GM12878 (cell line): ENCODE measurements at regions of chr20 and their contacts with region 1.

Region 1: DNA sequence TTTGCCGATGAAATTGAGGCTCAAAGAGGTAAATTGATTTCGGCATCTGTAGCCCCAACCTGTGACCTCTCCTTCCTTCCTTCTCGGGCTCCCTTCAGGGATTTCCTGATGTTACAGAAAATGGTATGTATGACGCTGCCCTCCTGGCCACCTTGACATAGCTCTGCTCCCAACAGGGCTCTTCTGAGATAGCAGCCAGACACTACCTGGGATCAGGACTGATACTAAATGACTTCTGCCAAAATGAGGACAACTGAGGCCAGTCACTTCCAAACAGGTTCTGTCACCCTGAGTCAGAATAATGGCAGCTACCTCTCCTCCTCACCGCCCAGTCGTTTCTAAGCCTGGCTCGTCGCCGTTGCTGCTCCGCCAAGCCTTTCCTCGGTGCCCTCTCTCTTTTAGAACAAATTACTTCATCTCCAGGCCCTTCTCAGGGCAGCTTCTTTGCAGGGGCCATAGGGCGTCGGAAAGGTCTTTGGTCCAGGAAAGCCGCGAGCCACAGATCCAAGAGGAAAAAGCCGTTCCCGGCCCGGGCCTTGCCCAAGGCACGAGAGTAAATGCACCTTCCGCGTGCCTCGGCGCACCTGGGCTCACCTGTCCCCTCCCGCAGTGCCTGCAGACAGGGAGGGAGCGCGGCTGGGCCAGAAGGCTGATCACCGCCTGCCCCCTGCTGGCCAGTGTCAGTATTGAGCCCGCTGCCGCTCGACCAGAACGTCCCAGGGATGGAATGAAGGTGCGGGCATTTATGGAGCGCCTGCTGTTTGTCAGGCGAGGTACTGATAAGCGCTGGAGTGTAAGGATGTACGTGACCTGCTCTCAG is 904 bp upstream of the LPIN3 start:
- DNase-seq: no peak
- ATAC-seq: peak; percentile 96
- H3K4me3 ChIP-seq: peak overlapping the region; percentile 68
- H3K27ac ChIP-seq: no peak overlapping the region
- H3K4me1 ChIP-seq: peaks cover 5% of the 10 kb centered on the region
- H3K27me3 ChIP-seq: no peaks in the 10 kb centered on the region
- CTCF ChIP-seq: peak; percentile 92 to 96 (median 95)
- EP300 ChIP-seq: no peak
- POLR2A ChIP-seq: no peak
- RAD21 ChIP-seq: peak; percentile 96

Region 2: GRCh38 chr20:41155261-41155660 is 184.5 kb before region 1 on chr20:
- CTCF ChIA-PET with region 1: interaction called, 14 read pairs
- POLR2A ChIA-PET with region 1: no interaction called
- RAD21 ChIA-PET with region 1: interaction called, 8 read pairs
- SMC1A ChIA-PET with region 1: interaction called, 3 read pairs
- in situ Hi-C with region 1: no loop called
- intact Hi-C with region 1: no loop called
- DNase-seq: no peak
- ATAC-seq: no peak
- H3K4me3 ChIP-seq: no peak overlapping the region
- H3K27ac ChIP-seq: no peak overlapping the region
- H3K4me1 ChIP-seq: peaks cover 54% of the 10 kb centered on the region
- H3K27me3 ChIP-seq: no peaks in the 10 kb centered on the region
- CTCF ChIP-seq: no peak
- EP300 ChIP-seq: no peak
- POLR2A ChIP-seq: no peak
- RAD21 ChIP-seq: no peak

Region 3: DNA sequence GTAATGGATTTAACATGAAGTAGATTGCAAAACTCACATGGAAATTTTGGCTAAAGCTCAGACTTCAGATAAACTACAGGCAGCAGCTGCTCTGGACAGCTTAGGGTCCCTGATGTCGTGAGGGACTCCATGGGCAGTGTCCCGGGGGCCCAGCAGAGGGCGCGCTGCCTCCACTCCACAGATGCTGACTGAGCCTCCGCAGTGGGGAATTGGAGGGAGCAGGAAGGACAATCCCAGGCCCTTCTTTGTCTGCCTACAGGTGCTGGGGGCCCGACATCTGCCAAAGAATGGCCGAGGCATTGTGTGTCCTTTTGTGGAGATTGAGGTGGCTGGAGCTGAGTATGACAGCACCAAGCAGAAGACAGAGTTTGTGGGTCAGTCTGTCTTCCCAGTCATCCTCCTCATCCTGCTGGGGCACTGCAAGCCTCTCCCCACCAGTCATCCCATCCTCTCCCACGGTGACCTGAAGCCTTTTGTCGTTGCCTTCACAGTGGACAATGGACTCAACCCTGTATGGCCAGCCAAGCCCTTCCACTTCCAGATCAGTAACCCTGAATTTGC is 166.5 kb before region 1 on chr20:
- CTCF ChIA-PET with region 1: interaction called, 52 read pairs
- POLR2A ChIA-PET with region 1: interaction called, 3 read pairs
- RAD21 ChIA-PET with region 1: interaction called, 11 read pairs
- SMC1A ChIA-PET with region 1: interaction called, 12 read pairs
- in situ Hi-C with region 1: loop called (anchors 5 kb)
- intact Hi-C with region 1: loop called (anchors 1 kb)
- DNase-seq: no peak
- ATAC-seq: peak; percentile 97
- H3K4me3 ChIP-seq: no peak overlapping the region
- H3K27ac ChIP-seq: no peak overlapping the region
- H3K4me1 ChIP-seq: no peaks in the 10 kb centered on the region
- H3K27me3 ChIP-seq: no peaks in the 10 kb centered on the region
- CTCF ChIP-seq: peak; percentile 87 to 94 (median 92)
- EP300 ChIP-seq: no peak
- POLR2A ChIP-seq: no peak
- RAD21 ChIP-seq: peak; percentile 90

Region 4: GRCh38 chr20:41249406-41250281 is 90.1 kb before region 1 on chr20:
- CTCF ChIA-PET with region 1: interaction called, 18 read pairs
- POLR2A ChIA-PET with region 1: no interaction called
- RAD21 ChIA-PET with region 1: interaction called, 8 read pairs
- SMC1A ChIA-PET with region 1: interaction called, 10 read pairs
- in situ Hi-C with region 1: no loop called
- intact Hi-C with region 1: loop called (anchors 5 kb)
- DNase-seq: no peak
- ATAC-seq: peak; percentile 84
- H3K4me3 ChIP-seq: no peak overlapping the region
- H3K27ac ChIP-seq: no peak overlapping the region
- H3K4me1 ChIP-seq: no peaks in the 10 kb centered on the region; the same call in 1 of the 2 replicates
- H3K27me3 ChIP-seq: no peaks in the 10 kb centered on the region
- CTCF ChIP-seq: peak; percentile 20 to 51 (median 20); a peak in 4 of 6 replicates
- EP300 ChIP-seq: no peak
- POLR2A ChIP-seq: no peak
- RAD21 ChIP-seq: peak; percentile 40; the same call in 1 of the 2 replicates